ENCODE measurements at regions of chr11 and their contacts with region 1.

Region 1: GRCh38 chr11:10076458-10077141 is 217.4 kb downstream of the SBF2 start:
- DNase-seq: peak; percentile 10
- H3K4me3 Mint-ChIP-seq: no peak overlapping the region
- H3K27ac Mint-ChIP-seq: no peak overlapping the region
- H3K4me1 Mint-ChIP-seq: no peaks in the 10 kb centered on the region
- H3K27me3 Mint-ChIP-seq: no peaks in the 10 kb centered on the region

Region 2: DNA sequence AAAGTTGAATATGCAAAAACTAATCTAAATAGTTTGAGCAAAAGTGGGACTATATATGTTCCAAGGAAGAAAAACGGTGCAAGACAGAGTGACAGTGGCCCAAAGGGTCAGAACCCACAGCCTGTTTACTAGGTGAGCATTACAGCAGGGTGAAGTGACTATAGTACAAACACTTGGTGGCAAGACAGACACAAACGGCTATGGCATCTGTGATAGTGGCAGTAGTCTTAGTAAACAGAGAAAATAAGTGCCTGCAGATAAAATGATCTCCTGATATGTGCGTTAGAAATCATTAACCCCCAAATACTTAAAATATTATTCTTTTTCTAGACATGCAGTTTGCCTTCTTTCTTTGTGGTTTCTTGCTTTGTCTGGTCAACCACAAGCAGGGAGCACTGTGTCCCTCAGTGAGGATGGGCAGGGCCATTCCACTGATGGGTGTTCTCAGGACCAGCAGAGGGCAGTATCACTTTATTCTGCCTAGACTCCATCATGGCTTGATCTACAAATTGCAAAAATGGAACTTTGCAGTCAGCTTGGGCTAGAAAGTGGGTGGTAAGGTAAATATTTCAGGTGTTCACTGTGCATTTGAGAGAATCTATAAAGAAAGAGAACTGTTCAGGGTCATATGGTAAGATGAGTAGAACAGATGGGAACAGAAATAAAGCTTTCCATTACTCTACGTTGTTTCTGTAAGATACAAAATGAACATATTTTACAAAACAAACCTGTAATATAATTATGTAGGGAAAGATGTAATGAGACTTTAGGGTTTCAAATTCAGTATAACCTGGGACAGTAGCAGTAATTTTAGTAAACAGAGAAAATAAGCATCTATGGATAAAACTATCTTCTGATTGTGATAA is 214.5 kb before region 1 on chr11:
- intact Hi-C with region 1: loop called (anchors 1 kb)
- DNase-seq: peak; percentile 11
- H3K4me3 Mint-ChIP-seq: no peak overlapping the region
- H3K27ac Mint-ChIP-seq: peak overlapping the region; percentile 1
- H3K4me1 Mint-ChIP-seq: peaks cover 34% of the 10 kb centered on the region
- H3K27me3 Mint-ChIP-seq: peaks cover 4% of the 10 kb centered on the region

Region 3: DNA sequence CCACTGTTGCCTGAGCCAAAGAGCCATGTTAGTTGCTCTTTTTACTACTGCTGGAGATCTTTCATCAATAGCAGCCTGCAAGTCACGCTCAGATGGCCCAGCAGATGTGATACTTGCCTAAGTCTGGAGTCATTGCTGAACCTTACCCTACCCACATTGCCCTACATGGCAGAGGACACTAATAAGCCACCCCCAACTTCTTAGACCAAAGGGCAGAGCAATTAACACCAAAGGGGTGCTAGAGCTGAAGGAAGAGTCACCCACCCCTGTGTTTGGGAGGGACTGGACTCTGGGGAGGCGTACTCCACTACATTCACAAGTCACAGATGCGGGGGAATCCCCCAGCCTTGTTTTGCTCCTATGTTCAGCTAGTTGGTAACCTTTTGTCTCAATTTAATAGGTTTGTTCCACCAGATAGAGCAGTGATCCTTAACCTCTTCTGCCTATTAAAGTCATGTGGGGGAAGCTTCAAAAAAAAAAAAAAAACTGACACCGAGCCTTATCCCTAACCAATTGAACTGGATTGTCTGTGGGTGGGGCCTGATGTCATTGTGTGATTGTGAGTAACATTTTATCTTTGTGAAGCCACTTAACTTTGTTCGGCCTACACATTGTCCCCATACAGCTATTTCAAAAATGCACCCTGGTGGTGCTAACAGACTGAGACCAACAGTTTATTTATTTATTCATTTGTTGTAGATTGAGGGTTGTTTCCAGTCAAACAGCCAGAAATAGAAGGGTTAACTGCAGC is 241.4 kb after region 1 on chr11:
- intact Hi-C with region 1: no loop called
- DNase-seq: no peak
- H3K4me3 Mint-ChIP-seq: no peak overlapping the region
- H3K27ac Mint-ChIP-seq: no peak overlapping the region
- H3K4me1 Mint-ChIP-seq: peaks cover 27% of the 10 kb centered on the region
- H3K27me3 Mint-ChIP-seq: peaks cover 6% of the 10 kb centered on the region